PC-9 (cell line): ENCODE measurements at regions of chr7 and their contacts with region 1.

Region 1: DNA sequence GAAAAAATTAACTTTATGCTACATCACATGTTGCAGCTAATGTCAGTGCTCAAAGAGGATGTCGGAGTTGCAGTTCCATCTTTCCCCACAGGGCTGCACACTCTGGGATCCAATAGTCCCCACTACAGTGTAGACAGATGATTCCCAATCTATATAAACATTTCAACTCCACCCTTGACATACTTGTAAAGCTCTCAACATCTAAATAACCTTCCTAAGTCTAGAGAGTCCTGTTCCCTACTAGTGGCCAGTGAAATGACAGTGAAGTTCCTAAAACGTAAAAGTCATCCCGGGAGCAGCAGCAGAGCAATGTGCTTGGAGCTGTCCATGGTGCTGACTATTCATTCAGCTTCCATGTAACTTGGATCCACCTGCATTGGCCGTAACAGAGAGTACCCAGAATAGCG is 145.1 kb downstream of the GRM8 start:
- DNase-seq: peak; percentile 37 to 43
- H3K4me3 ChIP-seq: no peak overlapping the region
- H3K27ac ChIP-seq: no peak overlapping the region
- H3K4me1 ChIP-seq: no peaks in the 10 kb centered on the region
- H3K27me3 ChIP-seq: no peaks in the 10 kb centered on the region
- CTCF ChIP-seq: peak; percentile 77

Region 2: GRCh38 chr7:127245607-127246006 is 138.0 kb after region 1 on chr7:
- CTCF ChIA-PET with region 1: no interaction called
- POLR2A ChIA-PET with region 1: no interaction called
- intact Hi-C with region 1: loop called (anchors 1 kb)
- DNase-seq: no peak
- H3K4me3 ChIP-seq: no peak overlapping the region
- H3K27ac ChIP-seq: no peak overlapping the region
- H3K4me1 ChIP-seq: no peaks in the 10 kb centered on the region
- H3K27me3 ChIP-seq: peaks cover 20% of the 10 kb centered on the region; the same call in 1 of the 2 replicates
- CTCF ChIP-seq: no peak